Activated CD4-positive, alpha-beta T cell treated with anti-CD3 and anti-CD28 coated beads for 36 hours (primary cell): ENCODE measurements at regions of chr1 and their contacts with region 1.

Region 1: DNA sequence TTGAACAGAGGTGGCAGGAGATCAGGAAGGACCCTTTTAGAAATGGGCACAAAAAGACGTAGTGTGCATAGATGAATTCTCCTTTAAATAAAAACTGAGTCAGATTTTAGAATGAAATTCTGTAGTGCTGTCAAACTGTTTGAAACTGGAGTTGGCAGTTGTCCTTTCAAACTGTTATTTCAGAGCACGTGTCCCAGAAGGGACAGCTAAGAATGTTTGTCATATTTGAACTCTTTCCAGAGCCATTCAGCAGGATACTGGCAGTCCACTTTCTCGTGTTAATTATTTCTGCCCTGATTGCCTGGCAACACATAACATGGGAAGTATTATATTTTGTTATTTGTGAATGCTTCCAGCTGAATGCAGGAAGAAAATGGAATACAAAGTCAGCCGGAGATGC is 212.3 kb upstream of the DPYD start:
- DNase-seq: no peak
- ATAC-seq: no peak
- H3K4me3 Mint-ChIP-seq: no peak overlapping the region
- H3K27ac Mint-ChIP-seq: no peak overlapping the region
- H3K4me1 Mint-ChIP-seq: no peaks in the 10 kb centered on the region
- H3K27me3 Mint-ChIP-seq: peaks cover 1% of the 10 kb centered on the region

Region 2: GRCh38 chr1:98090351-98090750 is 42.8 kb before region 1 on chr1:
- CTCF ChIA-PET with region 1: no interaction called
- POLR2A ChIA-PET with region 1: no interaction called
- intact Hi-C with region 1: no loop called
- DNase-seq: no peak
- ATAC-seq: no peak
- H3K4me3 Mint-ChIP-seq: no peak overlapping the region
- H3K27ac Mint-ChIP-seq: no peak overlapping the region
- H3K4me1 Mint-ChIP-seq: no peaks in the 10 kb centered on the region
- H3K27me3 Mint-ChIP-seq: no peaks in the 10 kb centered on the region

Region 3: GRCh38 chr1:98110674-98111073 is 22.5 kb before region 1 on chr1:
- CTCF ChIA-PET with region 1: no interaction called
- POLR2A ChIA-PET with region 1: no interaction called
- intact Hi-C with region 1: no loop called
- DNase-seq: no peak
- ATAC-seq: no peak
- H3K4me3 Mint-ChIP-seq: no peak overlapping the region
- H3K27ac Mint-ChIP-seq: no peak overlapping the region
- H3K4me1 Mint-ChIP-seq: no peaks in the 10 kb centered on the region
- H3K27me3 Mint-ChIP-seq: no peaks in the 10 kb centered on the region

Region 4: DNA sequence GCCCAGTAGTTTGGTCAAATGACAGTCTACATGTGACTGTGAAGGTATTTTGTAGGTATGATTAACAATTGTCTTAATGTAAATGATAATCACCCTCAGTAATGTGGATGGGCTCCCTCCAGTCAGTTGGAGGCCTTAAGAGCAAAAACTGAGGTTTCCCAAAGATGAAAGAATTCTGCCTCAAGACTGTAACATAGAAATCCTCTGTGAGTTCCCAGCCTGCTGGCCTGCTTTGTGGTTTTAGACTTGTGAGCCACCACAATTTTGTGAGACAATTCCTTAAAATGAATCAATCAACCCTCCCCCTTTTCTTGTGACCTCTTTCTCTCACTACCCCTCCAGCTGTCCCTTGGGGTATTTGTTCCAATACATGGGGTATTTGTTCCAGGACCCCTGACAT is 14.1 kb after region 1 on chr1:
- CTCF ChIA-PET with region 1: interaction called, 3 read pairs
- POLR2A ChIA-PET with region 1: no interaction called
- intact Hi-C with region 1: loop called in 1 of 2 experiments (anchors 1 kb)
- DNase-seq: no peak
- ATAC-seq: no peak
- H3K4me3 Mint-ChIP-seq: no peak overlapping the region
- H3K27ac Mint-ChIP-seq: no peak overlapping the region
- H3K4me1 Mint-ChIP-seq: no peaks in the 10 kb centered on the region
- H3K27me3 Mint-ChIP-seq: no peaks in the 10 kb centered on the region

Region 5: GRCh38 chr1:98388441-98388840 is 255.3 kb after region 1 on chr1:
- CTCF ChIA-PET with region 1: no interaction called
- POLR2A ChIA-PET with region 1: no interaction called
- intact Hi-C with region 1: no loop called
- DNase-seq: peak; percentile 9
- ATAC-seq: peak; percentile 72
- H3K4me3 Mint-ChIP-seq: no peak overlapping the region
- H3K27ac Mint-ChIP-seq: no peak overlapping the region
- H3K4me1 Mint-ChIP-seq: peaks cover 12% of the 10 kb centered on the region
- H3K27me3 Mint-ChIP-seq: no peaks in the 10 kb centered on the region